PC-3 (cell line): ENCODE measurements at regions of chr17 and their contacts with region 1.

Region 1: GRCh38 chr17:69523244-69523861 is 108.9 kb downstream of the MAP2K6 start:
- DNase-seq: peak; percentile 76
- ATAC-seq: peak; percentile 90
- H3K4me3 ChIP-seq: peak overlapping the region; percentile 53
- H3K27ac ChIP-seq: no peak overlapping the region
- H3K4me1 ChIP-seq: 0 out of 2 replicates have a peak, but pooled peaks cover 3% of the 10 kb centered on the region
- H3K27me3 ChIP-seq: no peaks in the 10 kb centered on the region
- CTCF ChIP-seq: peak; percentile 95

Region 2: GRCh38 chr17:69246726-69247375 is 276.5 kb before region 1 on chr17:
- CTCF ChIA-PET with region 1: no interaction called
- POLR2A ChIA-PET with region 1: no interaction called
- intact Hi-C with region 1: loop called (anchors 2 kb)
- DNase-seq: peak; percentile 81
- ATAC-seq: peak; percentile 70
- H3K4me3 ChIP-seq: no peak overlapping the region
- H3K27ac ChIP-seq: no peak overlapping the region
- H3K4me1 ChIP-seq: no peaks in the 10 kb centered on the region
- H3K27me3 ChIP-seq: no peaks in the 10 kb centered on the region
- CTCF ChIP-seq: peak; percentile 93

Region 3: DNA sequence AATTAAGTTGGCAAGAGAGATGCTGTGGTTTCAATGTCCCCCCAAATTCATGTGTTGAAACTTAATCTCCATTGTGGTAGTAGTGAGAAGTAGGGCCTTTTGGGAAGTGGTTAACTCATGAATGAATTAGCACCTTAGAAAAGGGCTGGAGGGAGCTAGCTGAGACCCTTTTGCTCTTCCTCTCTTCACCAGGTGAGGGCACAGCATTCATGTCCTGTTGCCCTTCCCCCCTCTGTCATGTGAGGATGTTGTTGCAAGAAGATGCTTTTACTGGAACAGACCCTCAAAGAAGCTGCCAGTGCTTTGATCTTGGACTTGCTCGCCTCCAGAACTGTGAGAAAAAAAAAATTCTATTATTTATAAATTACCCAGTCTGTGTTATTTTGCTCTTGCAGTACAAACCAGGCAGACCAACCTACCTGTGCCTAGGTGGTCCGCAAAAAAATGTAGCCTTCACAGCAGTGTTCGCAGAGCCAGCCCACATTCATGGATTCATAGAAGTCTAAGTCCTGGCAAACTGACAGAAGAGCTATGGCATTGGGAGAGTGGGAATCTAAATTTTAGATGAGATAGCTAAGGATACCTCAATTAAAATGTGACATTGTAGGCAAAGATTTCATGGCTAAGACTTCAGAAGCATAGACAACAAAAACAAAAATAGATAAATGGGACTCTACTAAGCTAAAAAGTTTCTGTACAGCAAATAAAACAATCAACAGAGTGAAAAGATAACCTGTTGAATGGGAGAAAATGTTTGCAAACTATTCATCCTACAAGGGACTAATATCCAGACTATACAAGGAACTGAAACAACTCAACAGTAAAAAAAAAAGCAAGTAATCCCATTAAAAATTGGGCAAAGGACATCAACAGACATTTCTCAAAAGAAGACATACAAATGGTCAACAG is 164.4 kb before region 1 on chr17:
- CTCF ChIA-PET with region 1: interaction called, 6 read pairs
- POLR2A ChIA-PET with region 1: interaction called, 7 read pairs
- intact Hi-C with region 1: loop called (anchors 1 kb)
- DNase-seq: peak; percentile 54
- ATAC-seq: peak; percentile 73; the same call in 1 of the 2 replicates
- H3K4me3 ChIP-seq: no peak overlapping the region
- H3K27ac ChIP-seq: no peak overlapping the region
- H3K4me1 ChIP-seq: no peaks in the 10 kb centered on the region
- H3K27me3 ChIP-seq: no peaks in the 10 kb centered on the region
- CTCF ChIP-seq: peak; percentile 70

Region 4: GRCh38 chr17:69428254-69428980 is 94.9 kb before region 1 on chr17:
- CTCF ChIA-PET with region 1: no interaction called
- POLR2A ChIA-PET with region 1: no interaction called
- intact Hi-C with region 1: no loop called
- DNase-seq: no peak
- ATAC-seq: no peak
- H3K4me3 ChIP-seq: no peak overlapping the region
- H3K27ac ChIP-seq: no peak overlapping the region
- H3K4me1 ChIP-seq: peaks cover 7% of the 10 kb centered on the region
- H3K27me3 ChIP-seq: no peaks in the 10 kb centered on the region
- CTCF ChIP-seq: no peak

Region 5: DNA sequence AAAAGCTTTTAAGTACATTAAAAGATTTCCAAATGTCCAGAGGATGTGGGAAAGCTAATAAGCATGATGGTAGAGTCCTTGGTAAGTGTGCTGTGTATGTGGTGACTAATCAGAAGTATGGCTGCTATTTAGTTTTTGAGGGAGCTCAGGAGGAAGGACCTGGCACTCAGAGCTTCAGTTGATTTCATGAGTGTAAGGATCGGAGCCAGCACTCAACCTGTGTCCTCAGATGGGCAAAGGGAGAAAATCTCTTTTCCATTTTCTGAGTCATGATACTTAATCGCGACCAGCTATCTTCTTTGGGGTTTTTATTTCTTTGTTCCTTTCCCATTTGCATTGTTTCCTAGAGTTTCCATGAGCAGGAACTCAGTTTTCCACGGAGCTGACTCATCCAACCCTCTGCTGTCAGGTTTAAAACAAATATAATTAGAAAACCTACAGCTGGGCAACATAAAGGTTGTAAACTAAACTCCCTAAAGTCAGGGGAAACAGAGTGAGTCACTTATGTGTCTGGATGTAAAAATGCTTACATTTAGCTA is 16.5 kb after region 1 on chr17:
- CTCF ChIA-PET with region 1: interaction called, 19 read pairs
- POLR2A ChIA-PET with region 1: no interaction called
- intact Hi-C with region 1: no loop called
- DNase-seq: peak; percentile 96
- ATAC-seq: peak; percentile 91
- H3K4me3 ChIP-seq: peak overlapping the region; percentile 43
- H3K27ac ChIP-seq: peak overlapping the region; percentile 96
- H3K4me1 ChIP-seq: peaks cover 27% of the 10 kb centered on the region
- H3K27me3 ChIP-seq: no peaks in the 10 kb centered on the region
- CTCF ChIP-seq: no peak

Region 6: DNA sequence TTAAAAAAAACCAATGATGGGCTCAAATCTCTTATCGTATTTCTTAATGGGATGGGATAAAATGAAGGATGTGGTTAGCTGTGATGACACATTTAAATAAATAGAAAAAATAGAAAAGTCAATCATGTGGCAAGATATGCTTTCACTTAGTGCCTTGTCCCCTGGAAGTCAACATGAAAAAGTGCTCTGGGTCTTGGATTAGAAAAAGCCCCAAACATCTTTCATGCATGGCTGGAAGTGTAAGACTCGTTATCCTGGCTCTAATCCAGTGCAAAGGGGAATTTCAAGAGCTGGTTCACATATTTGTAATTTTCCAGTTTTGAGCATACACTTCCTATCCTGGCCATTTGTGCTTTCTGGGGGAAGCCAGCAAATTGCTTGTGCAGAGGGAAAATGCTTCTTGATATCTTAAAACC is 52.0 kb after region 1 on chr17:
- CTCF ChIA-PET with region 1: no interaction called
- POLR2A ChIA-PET with region 1: no interaction called
- intact Hi-C with region 1: no loop called
- DNase-seq: peak; percentile 97
- ATAC-seq: peak; percentile 87
- H3K4me3 ChIP-seq: no peak overlapping the region; the same call in 1 of the 2 replicates
- H3K27ac ChIP-seq: peak overlapping the region; percentile 58
- H3K4me1 ChIP-seq: peaks cover 25% of the 10 kb centered on the region
- H3K27me3 ChIP-seq: no peaks in the 10 kb centered on the region
- CTCF ChIP-seq: no peak

Region 7: DNA sequence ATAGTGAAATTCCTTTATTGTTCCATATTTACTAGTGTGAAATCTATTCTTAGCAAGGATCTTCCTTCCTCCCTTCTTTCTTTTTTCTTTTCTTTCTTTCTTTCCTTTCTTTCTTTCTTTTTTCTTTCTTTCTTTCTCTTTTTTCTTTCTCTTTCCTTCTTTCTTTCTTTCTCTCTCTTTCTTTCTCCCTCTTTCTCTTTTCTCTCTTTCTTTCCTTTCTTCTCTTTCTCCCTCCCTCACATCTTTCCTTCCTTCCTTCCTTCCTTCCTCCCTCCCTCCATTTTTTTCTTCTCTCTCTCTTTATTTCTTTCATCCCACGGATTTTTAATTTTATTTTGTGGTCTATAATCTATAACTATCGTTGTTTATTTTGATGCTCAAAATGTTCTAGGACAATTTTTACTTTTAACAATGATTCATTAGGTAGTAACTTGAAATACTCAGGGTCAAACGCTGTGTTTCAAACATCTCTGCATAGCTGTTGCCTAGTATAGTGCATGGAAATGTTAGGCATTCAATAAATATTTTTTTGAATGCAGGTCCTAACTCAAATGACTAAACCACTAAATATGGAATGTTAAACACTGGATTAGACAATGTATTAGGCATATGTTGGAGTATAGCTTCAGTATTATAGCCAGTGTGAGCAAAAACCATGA is 69.5 kb after region 1 on chr17:
- CTCF ChIA-PET with region 1: no interaction called
- POLR2A ChIA-PET with region 1: no interaction called
- intact Hi-C with region 1: no loop called
- DNase-seq: no peak
- ATAC-seq: no peak
- H3K4me3 ChIP-seq: no peak overlapping the region
- H3K27ac ChIP-seq: no peak overlapping the region
- H3K4me1 ChIP-seq: peaks cover 2% of the 10 kb centered on the region
- H3K27me3 ChIP-seq: no peaks in the 10 kb centered on the region
- CTCF ChIP-seq: no peak

Region 8: GRCh38 chr17:69672924-69673323 is 149.6 kb after region 1 on chr17:
- CTCF ChIA-PET with region 1: no interaction called
- POLR2A ChIA-PET with region 1: no interaction called
- intact Hi-C with region 1: loop called (anchors 5 kb)
- DNase-seq: peak; percentile 46
- ATAC-seq: peak; percentile 31
- H3K4me3 ChIP-seq: no peak overlapping the region
- H3K27ac ChIP-seq: no peak overlapping the region
- H3K4me1 ChIP-seq: peaks cover 7% of the 10 kb centered on the region
- H3K27me3 ChIP-seq: no peaks in the 10 kb centered on the region
- CTCF ChIP-seq: no peak

Region 9: DNA sequence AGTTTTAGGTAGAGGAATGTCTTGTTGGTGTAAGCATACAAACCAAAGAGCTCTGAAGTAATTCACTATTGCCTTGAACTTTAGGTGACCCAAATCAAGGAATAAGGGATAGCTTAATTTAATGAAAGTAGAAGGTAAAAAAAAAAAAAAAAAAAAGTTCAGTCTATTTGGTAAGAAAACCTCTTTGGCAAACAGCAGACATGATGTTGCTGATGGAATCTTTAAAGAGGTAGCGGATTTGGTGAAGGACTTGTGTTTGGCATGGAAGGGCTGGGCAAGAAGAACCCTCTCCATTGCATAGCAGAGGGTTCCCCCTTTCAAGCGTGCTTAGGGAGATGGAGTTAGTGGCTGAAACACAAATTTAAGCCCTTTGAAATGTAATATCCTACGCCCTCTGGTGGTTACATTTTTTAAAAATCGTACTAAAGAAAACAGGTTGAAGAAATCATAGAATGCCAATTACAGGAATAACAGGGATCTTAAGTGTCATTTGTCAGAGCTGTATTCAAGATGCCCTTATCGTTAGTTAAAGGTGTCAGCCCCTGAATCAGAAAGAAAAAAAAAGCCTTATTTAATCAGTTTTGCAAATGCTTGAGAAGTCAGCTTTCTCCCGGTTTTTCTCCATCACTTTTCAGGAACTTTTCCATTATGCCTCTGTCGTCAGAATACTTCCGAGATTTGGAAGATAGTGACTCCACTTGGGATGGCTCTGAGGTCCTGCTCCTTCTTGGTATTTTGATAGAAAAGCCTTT is 1029.1 kb after region 1 on chr17:
- CTCF ChIA-PET with region 1: no interaction called
- POLR2A ChIA-PET with region 1: no interaction called
- intact Hi-C with region 1: loop called (anchors 5 kb)
- DNase-seq: peak; percentile 80
- ATAC-seq: peak; percentile 78
- H3K4me3 ChIP-seq: no peak overlapping the region
- H3K27ac ChIP-seq: no peak overlapping the region
- H3K4me1 ChIP-seq: no peaks in the 10 kb centered on the region
- H3K27me3 ChIP-seq: no peaks in the 10 kb centered on the region
- CTCF ChIP-seq: peak; percentile 81

Region 10: GRCh38 chr17:70629902-70630301 is 1106.5 kb after region 1 on chr17:
- CTCF ChIA-PET with region 1: interaction called, 13 read pairs
- POLR2A ChIA-PET with region 1: no interaction called
- intact Hi-C with region 1: loop called (anchors 1 kb)
- DNase-seq: peak; percentile 56
- ATAC-seq: peak; percentile 49; the same call in 1 of the 2 replicates
- H3K4me3 ChIP-seq: no peak overlapping the region
- H3K27ac ChIP-seq: no peak overlapping the region
- H3K4me1 ChIP-seq: no peaks in the 10 kb centered on the region
- H3K27me3 ChIP-seq: peaks cover 29% of the 10 kb centered on the region
- CTCF ChIP-seq: peak; percentile 57